Thyroid gland (tissue), 4 donors: ENCODE measurements at regions of chrX and their contacts with region 1.

Region 1: GRCh38 chrX:83630662-83631061 is 122.6 kb downstream of the POU3F4 start:
- DNase-seq: no peak
- H3K4me3 ChIP-seq: no peak overlapping the region
- H3K27ac ChIP-seq: no peak overlapping the region
- H3K4me1 ChIP-seq: no peaks in the 10 kb centered on the region
- H3K27me3 ChIP-seq: no peaks in the 10 kb centered on the region
- CTCF ChIP-seq: no peak
- POLR2A ChIP-seq: no peak

Region 2: GRCh38 chrX:83422836-83423235 is 207.8 kb before region 1 on chrX:
- intact Hi-C with region 1: no loop called
- DNase-seq: no peak
- H3K4me3 ChIP-seq: no peak overlapping the region
- H3K27ac ChIP-seq: no peak overlapping the region
- H3K4me1 ChIP-seq: no peaks in the 10 kb centered on the region
- H3K27me3 ChIP-seq: no peaks in the 10 kb centered on the region
- CTCF ChIP-seq: no peak
- POLR2A ChIP-seq: no peak

Region 3: DNA sequence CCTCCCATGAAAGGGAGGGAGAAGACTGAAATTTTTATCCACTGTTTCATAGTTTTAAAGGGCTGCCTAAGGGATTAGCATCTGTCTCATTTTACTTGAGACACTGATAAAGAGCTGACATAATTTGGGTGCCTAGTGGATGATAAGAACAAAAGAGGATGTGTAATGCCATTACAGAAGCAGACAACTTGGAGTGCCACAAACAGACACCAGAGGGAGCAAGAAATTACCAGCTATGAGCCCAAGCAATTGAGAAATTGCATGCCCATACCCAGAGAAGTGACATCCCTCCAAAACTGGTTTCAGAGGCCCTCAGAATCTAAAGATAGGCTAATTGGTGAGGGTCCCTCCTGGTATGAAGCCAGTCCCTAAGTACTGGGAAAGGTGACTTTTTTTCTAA is 161.1 kb before region 1 on chrX:
- intact Hi-C with region 1: loop called (anchors 5 kb)
- DNase-seq: peak; percentile 13 to 25
- H3K4me3 ChIP-seq: no peak overlapping the region
- H3K27ac ChIP-seq: no peak overlapping the region
- H3K4me1 ChIP-seq: no peaks in the 10 kb centered on the region
- H3K27me3 ChIP-seq: no peaks in the 10 kb centered on the region
- CTCF ChIP-seq: peak in 4 of 6 experiments; percentile 35 to 48 (median 42)
- POLR2A ChIP-seq: no peak

Region 4: GRCh38 chrX:83593634-83594294 is 36.9 kb before region 1 on chrX:
- intact Hi-C with region 1: no loop called
- DNase-seq: no peak
- H3K4me3 ChIP-seq: no peak overlapping the region
- H3K27ac ChIP-seq: no peak overlapping the region
- H3K4me1 ChIP-seq: no peaks in the 10 kb centered on the region
- H3K27me3 ChIP-seq: no peaks in the 10 kb centered on the region
- CTCF ChIP-seq: no peak
- POLR2A ChIP-seq: no peak